Activated CD4-positive, alpha-beta T cell treated with anti-CD3 and anti-CD28 coated beads for 36 hours (primary cell): ENCODE measurements at regions of chr10 and their contacts with region 1.

Region 1: GRCh38 chr10:91974960-91975359 is 51.4 kb downstream of the BTAF1 start:
- DNase-seq: no peak
- ATAC-seq: peak; percentile 61
- H3K4me3 Mint-ChIP-seq: no peak overlapping the region
- H3K27ac Mint-ChIP-seq: peak overlapping the region; percentile 53
- H3K4me1 Mint-ChIP-seq: peaks cover 42% of the 10 kb centered on the region
- H3K27me3 Mint-ChIP-seq: no peaks in the 10 kb centered on the region

Region 2: GRCh38 chr10:91901784-91902677 is 72.9 kb before region 1 on chr10:
- CTCF ChIA-PET with region 1: no interaction called
- POLR2A ChIA-PET with region 1: no interaction called
- intact Hi-C with region 1: loop called in 1 of 2 experiments (anchors 1 kb)
- DNase-seq: peak; percentile 80
- ATAC-seq: peak; percentile 100
- H3K4me3 Mint-ChIP-seq: no peak overlapping the region
- H3K27ac Mint-ChIP-seq: peak overlapping the region; percentile 82
- H3K4me1 Mint-ChIP-seq: peaks cover 25% of the 10 kb centered on the region
- H3K27me3 Mint-ChIP-seq: no peaks in the 10 kb centered on the region

Region 3: DNA sequence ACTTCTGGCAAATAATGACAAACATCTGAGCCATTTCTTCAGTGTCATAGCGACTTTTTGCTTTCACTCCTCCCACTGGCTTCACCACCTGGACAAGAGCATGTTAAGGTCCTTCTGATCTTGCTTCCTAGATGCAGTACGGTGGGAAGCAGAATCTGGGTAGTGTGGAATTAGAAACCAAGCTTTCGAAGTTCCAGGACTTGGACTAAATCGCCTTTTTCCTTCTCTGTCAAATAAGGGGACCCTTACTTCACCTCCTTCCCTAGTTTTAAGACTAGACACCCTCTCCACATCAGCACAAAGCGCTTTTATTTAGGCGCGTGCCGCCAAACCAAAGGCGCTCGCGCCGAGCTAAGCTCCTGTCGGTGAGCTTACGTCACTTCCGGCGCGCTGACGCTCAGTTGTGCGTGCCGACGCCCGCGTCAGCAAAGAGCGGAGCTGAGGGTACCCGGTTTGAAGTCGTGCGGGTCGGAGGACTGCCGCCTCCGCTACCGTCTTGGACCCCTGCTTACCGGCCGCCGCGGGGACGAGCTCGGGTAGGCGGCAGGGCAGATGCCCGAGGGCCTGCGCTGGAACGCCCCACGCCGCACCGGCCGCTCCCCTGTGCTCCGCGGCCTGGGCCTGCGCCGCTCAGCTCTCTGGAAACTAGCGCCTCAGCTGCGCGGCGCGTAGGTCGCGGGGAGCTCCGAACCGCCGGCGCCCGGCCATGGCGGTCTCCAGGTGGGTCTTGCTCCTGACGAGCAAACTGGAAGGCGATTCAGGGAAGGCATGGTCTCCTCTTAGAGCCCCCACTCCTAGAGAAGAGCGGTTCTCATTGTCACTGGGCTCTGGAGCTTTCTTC is 51.4 kb before region 1 on chr10 and contains the start of gene BTAF1:
- CTCF ChIA-PET with region 1: no interaction called
- POLR2A ChIA-PET with region 1: no interaction called
- intact Hi-C with region 1: loop called in 1 of 2 experiments (anchors 1 kb)
- DNase-seq: peak; percentile 96
- ATAC-seq: peak; percentile 96
- H3K4me3 Mint-ChIP-seq: peak within 1 kb of the TSS; percentile 97
- H3K27ac Mint-ChIP-seq: peak within 1 kb of the TSS; percentile 99
- H3K4me1 Mint-ChIP-seq: peaks cover 37% of the 10 kb centered on the region
- H3K27me3 Mint-ChIP-seq: peaks cover 2% of the 10 kb centered on the region
- total RNA-seq, gene BTAF1: 59.0 to 59.4 TPM

Region 4: DNA sequence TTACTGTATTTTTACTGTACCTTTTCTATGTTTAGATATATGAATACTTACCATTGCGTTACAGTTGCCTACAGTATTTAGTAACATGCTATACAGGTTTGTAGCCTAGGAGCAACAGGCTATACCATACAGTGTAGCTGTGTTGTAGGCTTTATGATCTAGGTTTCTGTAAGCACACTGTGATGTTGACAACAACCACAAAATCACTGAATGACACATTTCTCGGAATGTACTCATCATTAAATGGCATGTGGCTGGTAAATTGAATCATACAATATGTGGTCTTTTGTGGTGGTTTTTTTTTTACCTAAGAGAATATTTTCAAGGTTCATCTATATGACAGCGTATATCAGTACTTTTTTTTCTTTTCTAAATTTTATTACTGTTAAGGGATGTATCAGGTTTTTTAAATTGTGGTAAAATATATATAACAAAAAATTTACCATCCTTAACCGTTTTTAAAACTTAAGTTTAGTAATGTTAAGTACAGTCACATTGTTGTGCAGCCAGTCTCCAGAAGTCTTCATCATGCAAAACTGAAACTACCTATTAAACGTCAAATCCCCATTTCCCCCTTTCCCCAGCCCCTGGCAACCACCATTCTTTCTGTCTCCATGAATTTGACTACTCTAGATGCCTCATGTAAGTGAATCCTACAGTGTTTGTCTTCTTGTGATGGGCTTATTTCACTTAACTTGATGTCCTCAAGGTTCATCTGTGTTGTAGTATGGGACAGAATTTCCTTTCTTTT is 29.9 kb before region 1 on chr10:
- CTCF ChIA-PET with region 1: interaction called, 3 read pairs
- POLR2A ChIA-PET with region 1: no interaction called
- intact Hi-C with region 1: loop called (anchors 1 kb)
- DNase-seq: peak; percentile 36
- ATAC-seq: peak; percentile 98
- H3K4me3 Mint-ChIP-seq: no peak overlapping the region
- H3K27ac Mint-ChIP-seq: peak overlapping the region; percentile 77
- H3K4me1 Mint-ChIP-seq: peaks cover 24% of the 10 kb centered on the region
- H3K27me3 Mint-ChIP-seq: no peaks in the 10 kb centered on the region

Region 5: DNA sequence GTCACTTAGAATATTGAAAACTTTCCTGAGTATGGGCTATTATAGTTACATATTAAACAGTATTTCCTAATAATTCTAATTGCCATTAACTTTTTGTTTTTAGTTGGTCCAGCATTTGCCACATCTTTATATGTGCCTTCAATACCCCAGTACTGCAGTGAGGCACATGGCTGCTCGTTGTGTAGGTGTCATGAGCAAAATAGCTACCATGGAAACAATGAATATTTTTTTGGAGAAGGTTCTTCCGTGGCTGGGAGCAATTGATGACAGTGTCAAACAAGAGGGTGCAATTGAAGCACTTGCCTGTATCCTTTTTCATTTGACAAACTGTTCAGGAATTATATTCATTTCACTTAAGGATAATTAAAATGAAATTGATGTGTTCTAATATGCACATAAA is 21.3 kb after region 1 on chr10:
- CTCF ChIA-PET with region 1: interaction called, 4 read pairs
- POLR2A ChIA-PET with region 1: no interaction called
- intact Hi-C with region 1: loop called in 1 of 2 experiments (anchors 2 kb)
- DNase-seq: no peak
- ATAC-seq: no peak
- H3K4me3 Mint-ChIP-seq: no peak overlapping the region
- H3K27ac Mint-ChIP-seq: no peak overlapping the region
- H3K4me1 Mint-ChIP-seq: peaks cover 5% of the 10 kb centered on the region
- H3K27me3 Mint-ChIP-seq: no peaks in the 10 kb centered on the region